HepG2 (cell line): ENCODE measurements at regions of chr7 and their contacts with region 1.

Region 1: GRCh38 chr7:154427533-154427932 is 375.3 kb downstream of the DPP6 start:
- DNase-seq: no peak
- ATAC-seq: no peak
- H3K4me3 ChIP-seq: no peak overlapping the region
- H3K27ac ChIP-seq: no peak overlapping the region
- H3K4me1 ChIP-seq: no peaks in the 10 kb centered on the region
- H3K27me3 ChIP-seq: no peaks in the 10 kb centered on the region
- CTCF ChIP-seq: no peak
- EP300 ChIP-seq: no peak
- POLR2A ChIP-seq: no peak
- RAD21 ChIP-seq: no peak

Region 2: DNA sequence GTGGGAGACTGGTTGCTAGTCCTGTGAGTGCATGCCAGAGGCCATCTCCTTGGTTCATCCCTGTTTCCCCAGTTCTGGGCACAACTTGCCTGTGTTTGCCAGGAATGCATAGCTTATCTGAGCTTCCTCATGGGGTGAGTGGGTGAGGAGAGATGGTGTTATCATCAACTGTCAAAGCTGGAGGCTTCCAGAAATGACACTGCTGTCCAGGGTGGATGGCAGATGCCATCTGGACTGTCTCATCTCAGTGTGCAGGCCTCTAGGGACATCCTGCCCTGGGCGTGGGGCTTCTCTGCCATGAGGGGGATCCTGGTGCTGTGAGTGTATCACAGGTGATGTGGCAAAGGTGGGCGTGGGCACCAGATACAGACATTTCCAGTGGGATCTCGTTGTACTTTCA is 46.8 kb before region 1 on chr7:
- CTCF ChIA-PET with region 1: no interaction called
- POLR2A ChIA-PET with region 1: no interaction called
- in situ Hi-C with region 1: no loop called
- intact Hi-C with region 1: no loop called
- DNase-seq: no peak
- ATAC-seq: no peak
- H3K4me3 ChIP-seq: no peak overlapping the region
- H3K27ac ChIP-seq: no peak overlapping the region
- H3K4me1 ChIP-seq: peaks cover 22% of the 10 kb centered on the region
- H3K27me3 ChIP-seq: no peaks in the 10 kb centered on the region
- CTCF ChIP-seq: no peak
- EP300 ChIP-seq: no peak
- POLR2A ChIP-seq: no peak
- RAD21 ChIP-seq: no peak

Region 3: GRCh38 chr7:154390961-154391360 is 36.6 kb before region 1 on chr7:
- CTCF ChIA-PET with region 1: no interaction called
- POLR2A ChIA-PET with region 1: no interaction called
- in situ Hi-C with region 1: no loop called
- intact Hi-C with region 1: no loop called
- DNase-seq: no peak
- ATAC-seq: no peak
- H3K4me3 ChIP-seq: no peak overlapping the region
- H3K27ac ChIP-seq: no peak overlapping the region
- H3K4me1 ChIP-seq: no peaks in the 10 kb centered on the region
- H3K27me3 ChIP-seq: peaks cover 0 to 4% of the 10 kb centered on the region in 2 experiments; a peak in 1 of 5 replicates
- CTCF ChIP-seq: no peak
- EP300 ChIP-seq: no peak
- POLR2A ChIP-seq: no peak
- RAD21 ChIP-seq: no peak

Region 4: DNA sequence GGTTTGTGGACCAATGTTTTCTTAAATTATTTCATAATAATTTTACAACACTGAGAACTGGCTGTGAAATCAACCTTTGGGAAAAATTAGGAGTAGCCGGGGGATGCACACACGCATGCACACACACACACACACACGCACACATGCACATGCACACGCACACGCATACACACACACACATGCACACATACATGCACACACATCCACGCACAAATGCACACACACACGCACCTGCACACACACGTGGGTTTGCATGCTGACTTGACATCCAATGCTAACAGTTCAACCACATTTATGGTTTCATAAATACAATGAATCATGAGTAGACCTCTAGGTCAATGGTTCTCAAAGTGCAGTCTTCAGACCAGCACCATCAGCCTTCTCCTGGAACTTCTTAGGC is 21.2 kb before region 1 on chr7:
- CTCF ChIA-PET with region 1: no interaction called
- POLR2A ChIA-PET with region 1: no interaction called
- in situ Hi-C with region 1: no loop called
- intact Hi-C with region 1: loop called (anchors 1 kb)
- DNase-seq: no peak
- ATAC-seq: no peak
- H3K4me3 ChIP-seq: no peak overlapping the region
- H3K27ac ChIP-seq: no peak overlapping the region
- H3K4me1 ChIP-seq: no peaks in the 10 kb centered on the region
- H3K27me3 ChIP-seq: no peaks in the 10 kb centered on the region
- CTCF ChIP-seq: no peak
- EP300 ChIP-seq: no peak
- POLR2A ChIP-seq: no peak
- RAD21 ChIP-seq: no peak

Region 5: DNA sequence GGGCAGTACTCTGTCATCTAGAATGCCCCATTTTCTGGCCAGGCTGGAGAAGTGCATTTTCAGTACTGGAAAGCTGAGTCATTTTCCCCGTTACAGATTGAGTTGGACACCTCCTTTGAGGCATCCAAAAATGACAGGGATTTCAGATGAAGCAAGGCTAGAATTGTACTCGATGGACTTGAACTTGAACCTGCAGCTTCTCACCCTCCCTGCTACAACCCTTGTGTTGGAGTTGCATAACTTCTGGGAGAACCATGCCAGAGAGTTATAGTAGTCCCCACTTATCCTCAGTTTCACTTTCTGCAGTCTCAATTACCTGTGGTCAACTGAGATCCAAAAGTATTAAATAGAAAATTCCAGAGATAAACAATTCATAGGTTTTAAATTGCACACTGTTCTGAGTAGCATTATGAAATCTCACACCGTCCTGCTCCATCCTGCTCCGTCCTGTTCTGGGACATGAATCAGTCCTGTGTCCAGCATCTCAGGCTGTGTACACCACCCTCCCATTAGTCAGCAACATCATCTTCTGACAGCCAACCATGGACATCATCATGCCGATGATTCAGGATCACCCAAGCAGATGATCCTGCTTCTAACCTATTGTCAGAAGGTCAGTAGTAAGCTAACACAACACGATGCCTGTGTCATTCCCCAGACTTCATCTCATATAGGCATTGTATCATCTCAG is 11.7 kb before region 1 on chr7:
- CTCF ChIA-PET with region 1: no interaction called
- POLR2A ChIA-PET with region 1: no interaction called
- in situ Hi-C with region 1: no loop called
- intact Hi-C with region 1: loop called (anchors 1 kb)
- DNase-seq: no peak
- ATAC-seq: no peak
- H3K4me3 ChIP-seq: no peak overlapping the region
- H3K27ac ChIP-seq: no peak overlapping the region
- H3K4me1 ChIP-seq: no peaks in the 10 kb centered on the region
- H3K27me3 ChIP-seq: no peaks in the 10 kb centered on the region; a peak in 1 of 5 replicates
- CTCF ChIP-seq: no peak
- EP300 ChIP-seq: no peak
- POLR2A ChIP-seq: no peak
- RAD21 ChIP-seq: no peak

Region 6: DNA sequence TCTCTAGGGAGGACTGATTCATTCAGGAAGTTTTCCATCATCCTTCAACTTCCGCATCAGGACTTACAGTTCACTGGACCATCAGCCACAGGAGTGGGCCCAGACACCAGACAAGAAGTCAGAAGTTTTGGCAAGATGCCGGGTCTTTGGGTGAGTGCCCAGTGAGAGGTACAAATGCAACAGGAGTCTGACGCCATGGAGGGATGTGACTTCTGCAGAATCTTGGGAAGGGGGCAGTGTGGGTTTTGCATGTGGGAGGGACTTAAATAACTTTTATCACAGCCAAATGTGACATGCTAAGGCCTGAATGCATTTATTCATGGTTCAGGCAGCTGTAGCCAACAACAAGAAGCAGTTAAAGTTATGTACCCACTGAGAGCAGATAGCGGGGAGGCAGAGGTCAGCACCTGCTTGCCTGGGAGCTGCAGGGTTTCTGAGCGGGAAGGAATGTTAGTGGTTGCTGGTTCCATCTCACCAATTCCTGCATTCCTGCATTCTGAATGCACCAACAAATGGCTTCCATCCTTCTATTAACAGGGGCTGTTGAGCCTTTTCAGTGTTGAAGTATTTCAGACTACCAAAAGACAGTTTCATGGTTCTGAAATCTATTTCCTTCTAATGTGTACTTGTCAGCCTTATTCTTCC is 200.2 kb after region 1 on chr7:
- CTCF ChIA-PET with region 1: no interaction called
- POLR2A ChIA-PET with region 1: no interaction called
- in situ Hi-C with region 1: no loop called
- intact Hi-C with region 1: loop called (anchors 5 kb)
- DNase-seq: no peak
- ATAC-seq: no peak
- H3K4me3 ChIP-seq: no peak overlapping the region
- H3K27ac ChIP-seq: no peak overlapping the region
- H3K4me1 ChIP-seq: no peaks in the 10 kb centered on the region
- H3K27me3 ChIP-seq: peaks cover 0 to 16% of the 10 kb centered on the region in 2 experiments; a peak in 2 of 5 replicates
- CTCF ChIP-seq: no peak
- EP300 ChIP-seq: no peak
- POLR2A ChIP-seq: no peak
- RAD21 ChIP-seq: no peak